IMR-90 (cell line): ENCODE measurements at regions of chr2 and their contacts with region 1.

Region 1: GRCh38 chr2:74482801-74483674 is at the starts of genes CCDC142 and TTC31:
- DNase-seq: peak; percentile 93
- ATAC-seq: peak; percentile 93
- H3K4me3 ChIP-seq: peak within 1 kb of the TSS; percentile 80
- H3K27ac ChIP-seq: peak within 1 kb of the TSS; percentile 91
- H3K4me1 ChIP-seq: peaks cover 13% of the 10 kb centered on the region
- H3K27me3 ChIP-seq: no peaks in the 10 kb centered on the region
- CTCF ChIP-seq: peak; percentile 90
- POLR2A ChIP-seq: peak; percentile 57; the same call in 1 of the 2 replicates
- RAD21 ChIP-seq: peak; percentile 75
- total RNA-seq, gene CCDC142: 6.1 and 8.4 TPM in 2 replicates
- total RNA-seq, gene TTC31: 6.3 and 9.2 TPM in 2 replicates

Region 2: DNA sequence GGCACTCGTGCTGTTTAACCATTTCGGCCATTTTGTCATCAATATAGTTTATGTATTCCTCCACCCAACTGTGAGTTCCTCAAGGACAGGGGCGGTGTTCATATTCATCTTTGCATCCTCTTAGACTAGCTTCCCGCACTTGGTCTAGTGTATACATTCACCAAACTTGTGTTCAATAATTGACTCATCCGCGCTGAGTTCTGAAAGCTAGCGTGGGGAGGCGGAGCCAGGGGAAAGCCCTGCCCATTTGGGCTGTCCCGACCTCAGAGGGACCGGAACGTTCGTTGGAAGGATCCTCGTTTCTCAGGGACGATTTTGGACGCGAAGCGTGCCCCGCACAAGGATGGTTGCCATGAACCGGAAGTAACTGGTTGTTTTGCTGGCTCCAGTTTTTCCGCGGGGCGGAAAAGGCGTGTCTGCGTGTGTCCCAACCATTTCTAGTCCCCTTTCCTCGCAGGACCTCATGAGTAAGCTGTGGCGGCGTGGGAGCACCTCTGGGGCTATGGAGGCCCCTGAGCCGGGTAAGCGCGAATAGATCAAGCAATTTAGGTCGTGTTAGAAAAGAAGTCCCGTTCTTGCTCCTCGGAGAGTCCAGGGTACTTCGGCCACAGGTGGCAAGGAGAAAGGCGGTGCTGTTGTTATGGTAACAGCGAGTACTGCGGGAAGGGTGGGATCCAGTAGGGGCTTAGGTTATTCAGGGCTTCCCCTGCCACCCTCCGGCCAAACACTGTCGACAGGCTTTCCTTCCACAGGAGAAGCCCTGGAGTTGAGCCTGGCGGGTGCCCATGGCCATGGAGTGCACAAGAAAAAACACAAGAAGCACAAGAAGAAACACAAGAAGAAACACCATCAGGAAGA is 28.2 kb before region 1 on chr2 and contains the start of gene INO80B:
- CTCF ChIA-PET with region 1: no interaction called
- POLR2A ChIA-PET with region 1: interaction called, 5 read pairs
- dilution Hi-C with region 1: no loop called
- in situ Hi-C with region 1: no loop called
- intact Hi-C with region 1: loop called (anchors 1 kb)
- DNase-seq: peak; percentile 99
- ATAC-seq: peak; percentile 74
- H3K4me3 ChIP-seq: peak within 1 kb of the TSS; percentile 61
- H3K27ac ChIP-seq: peak within 1 kb of the TSS; percentile 21
- H3K4me1 ChIP-seq: peaks cover 10% of the 10 kb centered on the region
- H3K27me3 ChIP-seq: no peaks in the 10 kb centered on the region
- CTCF ChIP-seq: no peak
- POLR2A ChIP-seq: no peak
- RAD21 ChIP-seq: peak; percentile 1; the same call in 1 of the 2 replicates
- total RNA-seq, gene INO80B: 4.5 and 5.3 TPM in 2 replicates

Region 3: GRCh38 chr2:74529357-74530238 is 46.6 kb after region 1 on chr2 and contains the starts of genes AUP1 and HTRA2:
- CTCF ChIA-PET with region 1: interaction called, 5 read pairs
- POLR2A ChIA-PET with region 1: no interaction called
- dilution Hi-C with region 1: no loop called
- in situ Hi-C with region 1: no loop called
- intact Hi-C with region 1: loop called (anchors 1 kb)
- DNase-seq: peak; percentile 99
- ATAC-seq: peak; percentile 93
- H3K4me3 ChIP-seq: peak within 1 kb of the TSS; percentile 93
- H3K27ac ChIP-seq: peak within 1 kb of the TSS; percentile 85
- H3K4me1 ChIP-seq: peaks cover 12% of the 10 kb centered on the region
- H3K27me3 ChIP-seq: no peaks in the 10 kb centered on the region
- CTCF ChIP-seq: no peak
- POLR2A ChIP-seq: peak; percentile 93
- RAD21 ChIP-seq: peak; percentile 6
- total RNA-seq, gene AUP1: 45.8 and 47.5 TPM in 2 replicates
- total RNA-seq, gene HTRA2: 28.1 and 34.2 TPM in 2 replicates

Region 4: GRCh38 chr2:74576863-74577229 is 93.8 kb after region 1 on chr2:
- CTCF ChIA-PET with region 1: interaction called, 4 read pairs
- POLR2A ChIA-PET with region 1: no interaction called
- dilution Hi-C with region 1: no loop called
- in situ Hi-C with region 1: loop called (anchors 5 kb)
- intact Hi-C with region 1: no loop called
- DNase-seq: peak; percentile 90
- ATAC-seq: peak; percentile 47
- H3K4me3 ChIP-seq: no peak overlapping the region
- H3K27ac ChIP-seq: peak overlapping the region; percentile 84
- H3K4me1 ChIP-seq: peaks cover 21% of the 10 kb centered on the region
- H3K27me3 ChIP-seq: no peaks in the 10 kb centered on the region
- CTCF ChIP-seq: peak; percentile 36
- POLR2A ChIP-seq: no peak
- RAD21 ChIP-seq: peak; percentile 30

Region 5: DNA sequence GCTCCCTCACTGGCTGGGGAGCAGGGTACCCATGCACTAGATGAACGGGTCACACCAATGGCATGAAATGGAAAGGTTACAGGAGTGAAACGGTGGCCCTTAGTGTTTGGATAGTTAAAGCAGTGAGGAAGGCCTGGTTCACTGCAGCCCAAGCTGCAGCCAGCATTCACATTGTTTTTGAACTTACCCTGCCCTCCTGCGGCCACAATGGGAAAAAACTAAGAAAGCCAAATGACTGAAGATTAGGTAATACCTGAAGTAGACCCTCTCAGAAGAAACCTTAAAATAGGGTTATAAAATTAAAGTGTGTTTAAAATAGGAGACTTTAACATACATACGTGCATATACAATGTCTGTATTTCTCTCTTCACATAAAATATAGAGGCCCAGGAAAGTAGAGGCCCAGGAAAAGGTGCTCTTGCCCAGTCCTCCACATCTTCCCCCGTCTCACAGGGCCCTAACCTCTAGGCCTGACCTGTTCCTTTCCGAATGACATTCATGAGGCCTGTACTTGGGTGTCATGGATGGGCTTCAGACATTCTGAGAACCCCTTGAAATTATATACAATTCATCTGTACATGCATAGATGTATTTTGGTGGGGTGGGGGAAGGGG is 104.7 kb after region 1 on chr2:
- CTCF ChIA-PET with region 1: interaction called, 17 read pairs
- POLR2A ChIA-PET with region 1: no interaction called
- dilution Hi-C with region 1: no loop called
- in situ Hi-C with region 1: no loop called
- intact Hi-C with region 1: loop called (anchors 1 kb)
- DNase-seq: peak; percentile 74
- ATAC-seq: peak; percentile 88
- H3K4me3 ChIP-seq: no peak overlapping the region
- H3K27ac ChIP-seq: no peak overlapping the region
- H3K4me1 ChIP-seq: peaks cover 10% of the 10 kb centered on the region
- H3K27me3 ChIP-seq: peaks cover 10% of the 10 kb centered on the region
- CTCF ChIP-seq: peak; percentile 88
- POLR2A ChIP-seq: peak; percentile 47; the same call in 1 of the 2 replicates
- RAD21 ChIP-seq: peak; percentile 90

Region 6: DNA sequence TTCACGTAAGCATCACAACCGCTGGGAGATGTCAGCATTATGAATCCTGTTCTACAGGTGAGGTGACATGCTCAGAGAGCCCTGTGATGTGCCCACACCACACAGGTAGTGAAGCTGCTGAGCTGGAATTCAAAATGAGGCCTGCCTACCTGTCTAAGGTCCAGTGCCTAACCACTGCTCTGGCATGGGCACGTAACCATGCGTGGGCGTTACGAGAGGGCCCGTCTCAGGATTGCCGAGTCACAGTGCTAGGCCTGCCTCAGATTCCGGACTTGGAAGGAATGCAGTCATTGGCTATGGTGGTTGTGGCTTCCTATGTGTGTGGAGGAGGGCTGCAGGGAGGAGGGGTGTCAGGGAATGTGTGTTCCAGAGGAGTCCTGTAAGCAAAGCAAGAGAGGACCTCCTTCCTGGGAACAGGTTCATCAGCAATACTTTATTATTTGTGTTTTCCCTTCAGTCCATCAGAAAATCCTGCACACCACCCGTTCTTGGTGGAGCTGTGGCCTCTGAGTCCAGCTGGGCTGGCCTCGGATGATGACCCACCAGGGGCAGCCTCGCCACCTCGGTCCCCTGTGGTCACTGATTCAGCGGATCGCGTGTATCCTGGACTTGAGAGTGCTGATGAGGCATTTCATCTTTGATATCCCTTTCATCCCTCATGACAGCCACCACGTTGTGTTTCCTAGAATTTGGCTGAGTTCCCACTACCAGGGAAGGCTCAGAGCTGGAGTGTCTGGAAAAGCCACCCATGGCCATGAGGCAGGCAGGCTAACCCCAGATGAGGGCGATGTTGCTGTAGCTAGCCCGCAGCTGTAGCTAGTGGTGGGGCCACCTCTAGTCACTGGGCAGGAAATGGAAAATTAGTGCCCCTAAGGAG is 382.0 kb after region 1 on chr2:
- CTCF ChIA-PET with region 1: no interaction called
- POLR2A ChIA-PET with region 1: no interaction called
- dilution Hi-C with region 1: no loop called
- in situ Hi-C with region 1: loop called (anchors 25 kb)
- intact Hi-C with region 1: no loop called
- DNase-seq: peak; percentile 70
- ATAC-seq: peak; percentile 56
- H3K4me3 ChIP-seq: no peak overlapping the region
- H3K27ac ChIP-seq: no peak overlapping the region
- H3K4me1 ChIP-seq: peaks cover 27% of the 10 kb centered on the region
- H3K27me3 ChIP-seq: no peaks in the 10 kb centered on the region
- CTCF ChIP-seq: 0 out of 2 replicates have a peak, but pooled peaks have one; percentile 14
- POLR2A ChIP-seq: no peak
- RAD21 ChIP-seq: no peak